ENCODE measurements at regions of chr4 and their contacts with region 1.

Region 1: GRCh38 chr4:153083447-153083947 is 120.7 kb upstream of the TRIM2 start:
- DNase-seq: peak; percentile 79
- ATAC-seq: peak; percentile 55
- H3K4me3 ChIP-seq: no peak overlapping the region
- H3K4me3 Mint-ChIP-seq: peak overlapping the region; percentile 72
- H3K27ac ChIP-seq: no peak overlapping the region
- H3K27ac Mint-ChIP-seq: peak overlapping the region; percentile 47
- H3K4me1 ChIP-seq: peaks cover 25 to 32% of the 10 kb centered on the region in 2 donors
- H3K4me1 Mint-ChIP-seq: peaks cover 26% of the 10 kb centered on the region
- H3K27me3 ChIP-seq: no peaks in the 10 kb centered on the region
- H3K27me3 Mint-ChIP-seq: peaks cover 3% of the 10 kb centered on the region
- CTCF ChIP-seq: peak; percentile 76

Region 2: GRCh38 chr4:152843481-152844090 is 239.9 kb before region 1 on chr4:
- CTCF ChIA-PET with region 1: interaction called, 167 read pairs
- POLR2A ChIA-PET with region 1: no interaction called
- intact Hi-C with region 1: loop called (anchors 1 kb)
- DNase-seq: no peak
- ATAC-seq: no peak
- H3K4me3 ChIP-seq: no peak overlapping the region
- H3K4me3 Mint-ChIP-seq: no peak overlapping the region
- H3K27ac ChIP-seq: no peak overlapping the region
- H3K27ac Mint-ChIP-seq: no peak overlapping the region
- H3K4me1 ChIP-seq: peaks cover 0 to 6% of the 10 kb centered on the region in 2 donors
- H3K4me1 Mint-ChIP-seq: peaks cover 19% of the 10 kb centered on the region
- H3K27me3 ChIP-seq: no peaks in the 10 kb centered on the region
- H3K27me3 Mint-ChIP-seq: no peaks in the 10 kb centered on the region
- CTCF ChIP-seq: no peak

Region 3: DNA sequence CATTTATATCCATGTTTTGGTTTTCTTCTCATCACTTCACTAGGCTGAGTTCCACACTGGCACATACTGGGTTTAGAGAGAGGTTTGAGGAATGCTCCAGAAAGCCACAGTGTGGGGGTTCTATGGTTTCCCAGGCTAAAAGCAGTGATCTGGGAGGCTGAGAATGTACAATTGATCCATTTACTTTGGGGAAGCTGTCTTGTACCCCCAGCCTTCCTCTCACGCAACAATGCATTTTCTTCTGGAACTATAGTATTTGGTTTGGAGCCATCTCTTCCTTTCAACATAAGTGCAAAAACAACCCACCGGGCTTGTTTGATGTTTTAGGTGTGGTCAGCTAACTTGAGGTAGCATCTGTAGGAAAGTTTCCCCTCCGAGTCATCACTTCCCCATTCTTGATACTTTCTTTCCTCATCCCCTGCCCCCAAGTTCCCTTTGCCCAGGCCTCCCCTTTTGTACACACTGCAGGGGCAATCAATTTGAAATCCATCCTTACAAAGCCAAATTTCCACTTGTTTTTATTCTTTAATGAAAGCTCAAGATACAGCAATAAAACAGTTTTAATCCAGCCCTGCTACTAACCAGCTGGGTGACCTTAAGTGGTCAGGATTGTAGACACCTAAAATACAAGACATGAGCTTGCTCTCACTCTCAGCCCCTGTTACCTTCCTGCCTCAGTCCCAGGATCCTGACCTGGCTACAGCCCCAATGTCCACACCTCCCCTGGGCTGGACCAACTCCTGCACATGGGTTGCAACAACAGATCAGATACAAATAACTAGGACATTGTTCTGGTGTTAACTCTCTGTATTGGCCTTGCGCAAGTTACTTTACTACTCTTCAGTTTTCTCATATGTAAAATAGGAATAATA is 38.1 kb before region 1 on chr4:
- CTCF ChIA-PET with region 1: interaction called, 9 read pairs
- POLR2A ChIA-PET with region 1: no interaction called
- intact Hi-C with region 1: loop called (anchors 2 kb)
- DNase-seq: peak; percentile 76
- ATAC-seq: peak; percentile 88
- H3K4me3 ChIP-seq: peak overlapping the region in 1 of 5 experiments; percentile 24
- H3K4me3 Mint-ChIP-seq: peak overlapping the region; percentile 40
- H3K27ac ChIP-seq: peak overlapping the region; percentile 65 to 73
- H3K27ac Mint-ChIP-seq: peak overlapping the region; percentile 89
- H3K4me1 ChIP-seq: peaks cover 29% of the 10 kb centered on the region in 2 donors
- H3K4me1 Mint-ChIP-seq: peaks cover 51% of the 10 kb centered on the region
- H3K27me3 ChIP-seq: no peaks in the 10 kb centered on the region
- H3K27me3 Mint-ChIP-seq: no peaks in the 10 kb centered on the region
- CTCF ChIP-seq: no peak

Region 4: DNA sequence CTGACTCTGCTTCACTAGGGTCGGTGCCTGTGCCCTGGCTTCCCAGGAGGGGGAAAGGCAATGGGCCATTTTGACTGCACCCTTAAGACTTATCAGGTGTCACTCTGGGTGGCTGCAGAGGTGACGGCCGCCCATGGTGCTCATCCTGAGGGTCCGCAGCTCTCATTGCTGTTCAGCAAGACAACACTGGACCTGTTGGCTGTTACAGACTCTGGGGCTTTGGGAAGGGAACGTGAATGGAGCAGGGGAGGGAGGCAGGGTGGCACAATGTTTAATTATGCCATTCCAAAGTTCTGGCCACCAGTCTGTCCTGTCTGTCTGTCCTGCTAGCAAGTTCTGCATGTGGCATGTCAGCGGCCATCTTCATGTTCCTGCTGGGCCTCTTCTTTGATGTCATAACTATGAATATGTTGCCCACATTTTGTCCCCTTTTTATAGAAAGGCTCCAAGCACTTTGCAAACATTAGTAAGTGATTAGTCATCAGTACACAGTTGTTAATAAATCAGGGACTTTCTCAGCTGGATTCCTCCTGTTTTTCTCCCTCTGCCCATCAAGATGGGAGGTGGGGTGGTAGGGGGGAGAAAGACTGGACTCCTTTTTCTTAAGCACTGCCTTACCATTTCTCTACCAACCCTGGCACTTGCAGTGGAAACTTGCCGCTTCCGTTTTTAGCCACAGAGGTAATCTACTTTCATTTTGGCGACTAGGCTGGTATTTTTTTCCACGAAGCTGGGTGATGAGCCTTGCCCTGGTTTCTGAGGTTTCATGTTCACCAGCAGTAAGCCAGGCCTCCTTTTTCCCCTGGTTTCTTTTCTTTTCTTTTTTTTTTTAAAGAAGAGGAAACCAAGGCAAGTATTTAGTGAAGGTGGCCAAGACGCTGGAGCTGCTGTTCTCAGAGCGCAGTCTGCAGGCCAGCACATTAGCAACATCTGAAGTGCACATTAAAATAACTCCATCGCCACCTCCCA is 32.1 kb after region 1 on chr4:
- CTCF ChIA-PET with region 1: interaction called, 69 read pairs
- POLR2A ChIA-PET with region 1: interaction called, 3 read pairs
- intact Hi-C with region 1: loop called (anchors 1 kb)
- DNase-seq: peak; percentile 79
- ATAC-seq: peak; percentile 85
- H3K4me3 ChIP-seq: peak overlapping the region in 3 of 5 experiments; percentile 32 to 41 (median 35)
- H3K4me3 Mint-ChIP-seq: peak overlapping the region; percentile 72
- H3K27ac ChIP-seq: peak overlapping the region; percentile 58 to 79
- H3K27ac Mint-ChIP-seq: peak overlapping the region; percentile 95
- H3K4me1 ChIP-seq: peaks cover 38 to 56% of the 10 kb centered on the region in 2 donors
- H3K4me1 Mint-ChIP-seq: peaks cover 21% of the 10 kb centered on the region
- H3K27me3 ChIP-seq: no peaks in the 10 kb centered on the region
- H3K27me3 Mint-ChIP-seq: no peaks in the 10 kb centered on the region
- CTCF ChIP-seq: no peak

Region 5: GRCh38 chr4:153643406-153644383 is 560.2 kb after region 1 on chr4:
- CTCF ChIA-PET with region 1: interaction called, 33 read pairs
- POLR2A ChIA-PET with region 1: no interaction called
- intact Hi-C with region 1: loop called (anchors 1 kb)
- DNase-seq: peak; percentile 80
- ATAC-seq: peak; percentile 96
- H3K4me3 ChIP-seq: no peak overlapping the region
- H3K4me3 Mint-ChIP-seq: no peak overlapping the region
- H3K27ac ChIP-seq: no peak overlapping the region
- H3K27ac Mint-ChIP-seq: no peak overlapping the region
- H3K4me1 ChIP-seq: no peaks in the 10 kb centered on the region
- H3K4me1 Mint-ChIP-seq: peaks cover 8% of the 10 kb centered on the region
- H3K27me3 ChIP-seq: no peaks in the 10 kb centered on the region
- H3K27me3 Mint-ChIP-seq: no peaks in the 10 kb centered on the region
- CTCF ChIP-seq: peak; percentile 81